MCF 10A (cell line): ENCODE measurements at regions of chr21 and their contacts with region 1.

Region 1: DNA sequence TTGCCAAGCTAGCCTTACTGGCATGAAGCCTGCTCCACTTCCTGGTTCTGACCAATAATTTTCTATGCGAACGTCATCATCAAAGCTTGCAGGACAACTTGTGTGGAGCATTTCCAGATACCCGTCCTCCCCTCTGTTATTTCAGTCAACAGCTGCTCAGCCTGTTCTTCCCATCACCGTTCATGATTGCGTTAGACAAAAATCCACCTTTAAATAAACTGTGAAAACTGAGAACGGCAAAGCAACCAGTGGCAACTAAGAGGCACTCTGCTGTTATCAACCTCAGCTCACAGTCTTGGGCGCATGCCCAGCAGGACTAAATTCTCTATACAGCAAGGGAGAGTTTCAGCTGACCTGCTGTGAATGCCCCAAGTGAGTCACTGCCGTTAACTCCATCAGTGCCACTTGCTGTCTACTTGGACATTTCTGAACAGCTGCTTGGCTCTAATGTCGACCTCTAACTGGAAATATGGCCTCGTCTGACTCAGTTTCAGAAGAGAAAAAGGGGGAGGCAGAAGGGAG is 207.4 kb upstream of the RUNX1 start:
- DNase-seq: peak; percentile 99
- H3K4me3 Mint-ChIP-seq: peak overlapping the region; percentile 66
- H3K27ac Mint-ChIP-seq: peak overlapping the region; percentile 89
- H3K4me1 Mint-ChIP-seq: peaks cover 48% of the 10 kb centered on the region
- H3K27me3 Mint-ChIP-seq: no peaks in the 10 kb centered on the region
- CTCF ChIP-seq: no peak

Region 2: DNA sequence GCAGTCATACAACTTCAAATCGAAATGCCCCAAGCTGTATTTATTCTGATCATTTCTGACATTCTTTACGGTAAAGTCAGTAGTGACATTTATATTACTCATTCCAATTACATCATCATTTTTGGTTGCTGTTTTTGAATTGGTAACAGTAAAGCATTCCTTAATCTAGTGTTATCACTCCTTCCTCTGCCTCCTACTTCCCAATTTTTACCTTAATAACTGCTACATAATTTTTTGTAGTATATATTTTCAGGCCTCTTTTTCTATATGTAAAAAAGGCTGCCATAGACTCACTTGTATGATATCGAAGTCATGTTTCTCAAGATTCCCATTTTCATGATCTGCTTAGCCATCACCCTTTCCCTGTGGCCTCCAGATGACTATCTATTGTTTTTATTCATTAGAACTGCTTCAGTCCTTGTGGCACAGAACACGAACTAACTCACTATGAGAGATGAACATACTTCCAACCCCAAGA is 374.6 kb before region 1 on chr21:
- CTCF ChIA-PET with region 1: interaction called, 4 read pairs
- POLR2A ChIA-PET with region 1: interaction called, 15 read pairs
- intact Hi-C with region 1: loop called (anchors 10 kb)
- DNase-seq: peak; percentile 71
- H3K4me3 Mint-ChIP-seq: peak overlapping the region; percentile 99
- H3K27ac Mint-ChIP-seq: peak overlapping the region; percentile 91
- H3K4me1 Mint-ChIP-seq: peaks cover 48% of the 10 kb centered on the region
- H3K27me3 Mint-ChIP-seq: no peaks in the 10 kb centered on the region
- CTCF ChIP-seq: no peak